ENCODE measurements at regions of chr7 and their contacts with region 1.

Region 1: DNA sequence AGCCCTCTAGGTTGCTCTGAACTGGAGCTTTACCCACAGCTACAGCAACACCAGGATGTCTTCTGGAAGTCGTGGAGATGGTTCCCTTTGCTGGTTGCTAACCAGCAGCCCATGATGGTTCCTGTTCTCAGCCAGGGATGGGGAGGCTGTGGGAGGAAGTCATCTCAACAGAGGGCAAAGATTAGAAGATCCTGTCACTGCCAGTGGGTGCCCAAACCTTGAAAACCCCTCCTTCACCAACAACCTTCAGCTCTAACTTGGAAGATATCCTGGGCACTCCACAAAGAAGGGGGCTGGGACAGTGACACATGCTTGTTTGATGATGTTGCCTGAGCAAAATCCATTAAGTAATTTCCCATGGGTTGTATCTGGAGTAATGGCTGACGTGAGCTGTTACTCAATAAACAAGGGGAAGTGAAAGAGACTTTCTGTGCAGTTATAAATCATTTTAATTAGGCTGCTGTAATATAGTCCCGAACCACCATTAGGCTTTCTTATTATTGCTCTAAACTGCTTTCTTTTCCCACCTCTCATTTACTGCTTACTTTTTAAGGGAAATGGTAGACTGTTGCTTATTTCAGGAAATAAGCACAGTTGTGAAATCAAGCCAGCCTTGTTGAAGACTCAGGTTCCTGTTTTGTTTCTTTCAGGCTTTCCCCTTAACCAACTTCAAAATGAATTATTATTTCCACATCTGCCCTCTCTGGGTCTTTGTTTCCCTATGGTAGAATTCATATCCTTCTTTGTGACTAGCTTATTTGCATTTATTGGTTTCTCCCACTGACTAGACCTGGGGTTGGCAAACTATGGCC is 124.8 kb downstream of the PPP1R17 start:
- DNase-seq: no peak
- H3K4me3 ChIP-seq: no peak overlapping the region
- H3K27ac ChIP-seq: peak overlapping the region; percentile 26
- H3K4me1 ChIP-seq: no peaks in the 10 kb centered on the region
- H3K27me3 ChIP-seq: no peaks in the 10 kb centered on the region
- CTCF ChIP-seq: no peak

Region 2: GRCh38 chr7:32062150-32062549 is 250.3 kb after region 1 on chr7:
- intact Hi-C with region 1: loop called (anchors 10 kb)
- DNase-seq: peak; percentile 63
- H3K4me3 ChIP-seq: no peak overlapping the region
- H3K27ac ChIP-seq: no peak overlapping the region
- H3K4me1 ChIP-seq: peaks cover 10% of the 10 kb centered on the region
- H3K27me3 ChIP-seq: no peaks in the 10 kb centered on the region
- CTCF ChIP-seq: peak; percentile 47

Measured in colonic mucosa (tissue), 4 donors.